Breast epithelium (tissue), 4 donors: ENCODE measurements at regions of chr12 and their contacts with region 1.

Region 1: DNA sequence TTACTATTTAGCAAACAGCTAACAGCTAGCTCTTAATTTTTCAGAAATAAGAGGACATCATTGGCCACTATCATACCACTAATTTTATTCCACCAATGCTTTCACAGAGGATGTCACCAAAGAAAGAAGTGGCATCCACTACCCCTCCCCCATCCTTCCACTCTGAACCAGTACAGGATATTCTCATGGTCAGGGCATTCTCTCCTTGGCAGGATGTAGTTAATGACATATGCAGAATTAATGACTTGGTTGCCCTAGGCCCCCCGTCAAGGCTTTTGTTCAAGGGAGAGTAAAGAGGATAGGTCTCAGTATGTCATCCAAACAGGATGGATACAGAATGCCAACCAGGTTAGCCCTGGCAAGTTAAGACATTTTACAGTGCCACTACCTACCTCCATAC is 18.9 kb upstream of the NUP107 start:
- DNase-seq: no peak
- H3K4me3 ChIP-seq: no peak overlapping the region
- H3K27ac ChIP-seq: no peak overlapping the region
- H3K4me1 ChIP-seq: no peaks in the 10 kb centered on the region
- H3K27me3 ChIP-seq: no peaks in the 10 kb centered on the region
- CTCF ChIP-seq: no peak
- POLR2A ChIP-seq: no peak

Region 2: DNA sequence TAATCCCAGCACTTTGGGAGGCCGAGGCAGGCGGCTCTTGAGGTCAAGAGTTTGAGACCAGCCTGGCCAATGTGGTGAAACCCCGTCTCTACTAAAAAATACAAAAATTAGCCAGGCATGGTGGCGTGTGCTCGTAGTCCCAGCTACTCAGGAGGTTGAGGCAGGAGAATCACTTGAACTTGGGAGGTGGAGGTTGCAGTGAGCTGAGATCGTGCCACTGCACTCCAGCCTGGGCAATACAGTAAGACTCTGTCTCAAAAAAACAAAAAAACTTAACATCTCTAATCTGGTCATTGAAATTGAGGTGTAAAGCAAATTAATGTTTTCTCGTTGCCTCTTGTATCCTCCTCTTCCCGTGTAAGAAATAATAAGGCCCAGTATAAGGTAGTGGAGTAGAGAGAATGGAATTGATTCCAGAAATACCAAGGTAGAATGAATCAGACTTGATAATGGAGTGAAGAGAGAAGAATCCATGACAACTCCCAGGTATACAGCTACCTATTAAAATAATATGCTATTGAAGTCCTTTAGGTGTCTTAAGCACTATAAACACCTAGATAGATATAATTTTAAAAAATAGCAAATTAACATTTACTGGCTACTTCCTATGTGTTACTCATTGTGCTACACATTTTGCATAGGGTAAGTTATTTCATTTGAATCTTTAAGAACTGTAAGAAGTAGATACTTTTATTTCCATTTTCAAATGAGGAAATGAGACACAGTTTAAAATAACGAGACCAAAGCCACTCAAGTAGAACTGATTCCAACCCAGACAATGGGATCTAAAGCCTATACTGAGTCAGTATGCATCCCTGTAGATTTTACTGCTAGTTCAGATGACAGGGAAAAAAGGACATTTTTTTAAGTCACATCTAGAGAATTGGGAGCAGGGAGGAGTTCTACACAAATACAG is 34.0 kb before region 1 on chr12:
- intact Hi-C with region 1: loop called (anchors 2 kb)
- DNase-seq: no peak
- H3K4me3 ChIP-seq: no peak overlapping the region
- H3K27ac ChIP-seq: no peak overlapping the region
- H3K4me1 ChIP-seq: peaks cover 0 to 15% of the 10 kb centered on the region in 2 donors
- H3K27me3 ChIP-seq: no peaks in the 10 kb centered on the region
- CTCF ChIP-seq: no peak
- POLR2A ChIP-seq: no peak

Region 3: DNA sequence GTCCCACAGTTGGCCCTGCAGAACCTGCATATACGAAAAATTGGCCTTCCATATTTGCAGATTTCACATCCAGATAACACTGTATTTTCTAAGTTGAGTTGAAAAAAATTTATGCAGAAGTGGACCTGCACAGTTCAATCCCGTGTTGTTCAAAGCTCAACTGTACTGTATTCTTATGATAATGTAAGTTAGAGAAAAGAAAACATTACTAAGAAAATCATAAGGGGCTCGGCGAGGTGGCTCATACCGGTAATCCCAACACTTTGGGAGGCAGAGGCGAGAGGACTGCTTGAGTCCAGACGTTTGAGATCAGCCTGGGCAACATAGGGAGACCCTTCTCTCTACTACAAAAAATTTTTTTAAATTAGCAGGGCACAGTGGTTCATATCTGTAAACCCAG is 59.9 kb after region 1 on chr12:
- intact Hi-C with region 1: no loop called
- DNase-seq: no peak
- H3K4me3 ChIP-seq: no peak overlapping the region
- H3K27ac ChIP-seq: no peak overlapping the region
- H3K4me1 ChIP-seq: no peaks in the 10 kb centered on the region
- H3K27me3 ChIP-seq: no peaks in the 10 kb centered on the region
- CTCF ChIP-seq: no peak
- POLR2A ChIP-seq: no peak